CD8-positive, alpha-beta T cell (primary cell): ENCODE measurements at regions of chr7 and their contacts with region 1.

Region 1: DNA sequence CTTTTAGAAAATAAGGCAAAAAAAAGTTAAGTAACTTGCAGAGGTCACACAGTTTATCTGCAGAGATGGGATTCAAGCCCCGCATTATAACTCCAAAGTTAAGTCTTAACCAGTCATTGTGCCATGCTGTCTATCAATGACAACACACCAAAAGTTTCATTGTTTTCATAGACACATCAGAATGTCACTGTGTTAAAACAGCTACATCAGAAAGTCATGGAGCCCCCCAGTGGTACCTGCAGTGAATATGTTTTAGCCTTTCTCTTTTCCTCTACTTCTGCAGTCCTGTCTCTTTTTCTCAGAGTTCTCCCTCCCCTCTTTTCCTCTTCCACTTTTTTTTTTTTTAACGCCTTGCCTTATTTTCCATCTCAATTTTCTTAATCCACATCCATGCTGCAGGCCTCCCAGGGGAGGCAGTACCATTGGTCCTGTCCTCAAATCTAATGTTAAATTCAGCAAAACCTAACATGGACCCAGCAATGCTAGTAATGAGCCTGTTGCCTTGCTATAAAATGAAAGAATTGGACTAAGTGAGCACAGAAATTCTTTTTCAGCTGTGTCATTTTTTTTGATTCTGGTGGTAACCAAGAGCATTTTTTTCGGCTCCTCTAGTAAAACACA is 3.8 kb upstream of the NRCAM start:
- DNase-seq: peak in 4 of 9 experiments; percentile 17 to 60 (median 30)
- ATAC-seq: peak; percentile 23
- H3K4me3 ChIP-seq: no peak overlapping the region
- H3K4me3 Mint-ChIP-seq: no peak overlapping the region
- H3K27ac ChIP-seq: no peak overlapping the region
- H3K27ac Mint-ChIP-seq: peak overlapping the region; percentile 41
- H3K4me1 ChIP-seq: peaks cover 49% of the 10 kb centered on the region
- H3K4me1 Mint-ChIP-seq: peaks cover 62% of the 10 kb centered on the region
- H3K27me3 ChIP-seq: peaks cover 0 to 4% of the 10 kb centered on the region in 2 experiments
- H3K27me3 Mint-ChIP-seq: peaks cover 19% of the 10 kb centered on the region
- CTCF ChIP-seq: peak; percentile 56

Region 2: GRCh38 chr7:108049962-108050361 is 410.1 kb before region 1 on chr7:
- CTCF ChIA-PET with region 1: no interaction called
- POLR2A ChIA-PET with region 1: no interaction called
- intact Hi-C with region 1: no loop called
- DNase-seq: peak in 2 of 9 experiments; percentile 3 to 18
- ATAC-seq: no peak
- H3K4me3 ChIP-seq: no peak overlapping the region
- H3K4me3 Mint-ChIP-seq: no peak overlapping the region
- H3K27ac ChIP-seq: no peak overlapping the region
- H3K27ac Mint-ChIP-seq: no peak overlapping the region
- H3K4me1 ChIP-seq: peaks cover 4% of the 10 kb centered on the region
- H3K4me1 Mint-ChIP-seq: peaks cover 12% of the 10 kb centered on the region
- H3K27me3 ChIP-seq: no peaks in the 10 kb centered on the region
- H3K27me3 Mint-ChIP-seq: peaks cover 3% of the 10 kb centered on the region
- CTCF ChIP-seq: no peak

Region 3: DNA sequence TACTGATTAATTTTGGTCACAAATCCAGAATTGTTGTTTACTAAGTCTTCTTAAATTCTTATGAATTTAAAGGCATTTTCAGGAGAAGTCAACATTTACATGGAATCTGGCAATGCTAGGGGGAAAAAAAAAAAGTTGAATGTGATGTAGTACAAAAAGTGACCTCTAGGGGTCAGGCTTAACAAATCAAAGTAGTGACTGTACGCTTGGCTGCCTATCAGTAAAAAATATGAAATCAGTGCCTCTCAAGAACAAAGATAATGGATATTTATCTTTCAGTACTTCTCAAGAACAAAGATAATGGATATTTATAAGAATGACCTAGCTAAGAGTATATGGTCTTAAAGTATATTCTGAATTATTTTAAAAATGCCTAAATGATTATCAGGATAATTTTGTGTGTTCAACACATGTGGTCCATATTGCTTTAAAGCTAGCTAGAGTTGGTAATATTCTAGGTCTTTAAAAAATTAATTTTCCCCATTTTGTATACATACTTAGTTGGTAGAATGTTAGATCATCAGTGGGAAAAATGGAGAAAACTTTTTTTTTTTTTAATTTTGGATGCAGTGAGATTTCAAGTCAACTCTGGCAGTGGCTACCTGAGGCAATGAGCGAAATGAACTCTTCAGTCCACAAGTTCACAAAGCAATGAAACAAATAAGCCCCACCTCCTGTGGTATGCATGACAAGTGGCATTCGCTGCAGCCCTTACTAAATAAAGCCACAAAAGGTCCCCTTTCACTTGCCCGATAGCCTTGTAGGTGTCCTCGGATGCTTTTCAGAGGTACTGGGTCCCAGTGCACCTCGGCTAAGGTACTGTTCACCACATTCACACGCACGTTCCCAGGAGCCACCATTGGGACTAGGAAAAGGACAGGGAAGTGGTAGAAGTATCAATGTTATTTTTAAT is 278.7 kb before region 1 on chr7:
- CTCF ChIA-PET with region 1: interaction called, 3 read pairs
- POLR2A ChIA-PET with region 1: no interaction called
- intact Hi-C with region 1: loop called (anchors 2 kb)
- DNase-seq: peak in 2 of 9 experiments; percentile 51 to 66
- ATAC-seq: peak; percentile 59
- H3K4me3 ChIP-seq: no peak overlapping the region
- H3K4me3 Mint-ChIP-seq: no peak overlapping the region
- H3K27ac ChIP-seq: no peak overlapping the region
- H3K27ac Mint-ChIP-seq: no peak overlapping the region
- H3K4me1 ChIP-seq: no peaks in the 10 kb centered on the region
- H3K4me1 Mint-ChIP-seq: no peaks in the 10 kb centered on the region
- H3K27me3 ChIP-seq: no peaks in the 10 kb centered on the region
- H3K27me3 Mint-ChIP-seq: no peaks in the 10 kb centered on the region
- CTCF ChIP-seq: peak; percentile 94

Region 4: DNA sequence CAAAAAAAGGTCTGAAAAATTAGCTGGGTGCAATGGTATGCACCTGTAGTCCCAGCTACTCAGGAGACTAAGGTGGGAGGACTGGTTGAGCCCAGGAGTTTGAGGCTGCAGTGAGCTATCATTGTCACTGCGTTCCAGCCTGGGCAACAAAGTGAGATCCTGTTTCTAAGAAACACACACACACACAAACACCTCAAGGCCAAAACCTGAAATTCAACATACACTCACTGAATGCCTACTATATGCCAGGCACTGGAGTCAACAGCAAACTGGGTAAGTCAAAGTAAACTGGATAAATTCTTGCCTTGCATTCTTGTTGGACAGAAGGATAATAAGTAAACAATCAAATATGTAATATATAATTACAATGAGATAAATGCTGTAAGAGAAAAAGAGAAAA is 17.7 kb after region 1 on chr7:
- CTCF ChIA-PET with region 1: interaction called, 6 read pairs
- POLR2A ChIA-PET with region 1: no interaction called
- intact Hi-C with region 1: loop called in 1 of 2 experiments (anchors 2 kb)
- DNase-seq: no peak
- ATAC-seq: no peak
- H3K4me3 ChIP-seq: no peak overlapping the region
- H3K4me3 Mint-ChIP-seq: no peak overlapping the region
- H3K27ac ChIP-seq: no peak overlapping the region
- H3K27ac Mint-ChIP-seq: no peak overlapping the region
- H3K4me1 ChIP-seq: no peaks in the 10 kb centered on the region
- H3K4me1 Mint-ChIP-seq: no peaks in the 10 kb centered on the region
- H3K27me3 ChIP-seq: no peaks in the 10 kb centered on the region
- H3K27me3 Mint-ChIP-seq: no peaks in the 10 kb centered on the region
- CTCF ChIP-seq: no peak

Region 5: DNA sequence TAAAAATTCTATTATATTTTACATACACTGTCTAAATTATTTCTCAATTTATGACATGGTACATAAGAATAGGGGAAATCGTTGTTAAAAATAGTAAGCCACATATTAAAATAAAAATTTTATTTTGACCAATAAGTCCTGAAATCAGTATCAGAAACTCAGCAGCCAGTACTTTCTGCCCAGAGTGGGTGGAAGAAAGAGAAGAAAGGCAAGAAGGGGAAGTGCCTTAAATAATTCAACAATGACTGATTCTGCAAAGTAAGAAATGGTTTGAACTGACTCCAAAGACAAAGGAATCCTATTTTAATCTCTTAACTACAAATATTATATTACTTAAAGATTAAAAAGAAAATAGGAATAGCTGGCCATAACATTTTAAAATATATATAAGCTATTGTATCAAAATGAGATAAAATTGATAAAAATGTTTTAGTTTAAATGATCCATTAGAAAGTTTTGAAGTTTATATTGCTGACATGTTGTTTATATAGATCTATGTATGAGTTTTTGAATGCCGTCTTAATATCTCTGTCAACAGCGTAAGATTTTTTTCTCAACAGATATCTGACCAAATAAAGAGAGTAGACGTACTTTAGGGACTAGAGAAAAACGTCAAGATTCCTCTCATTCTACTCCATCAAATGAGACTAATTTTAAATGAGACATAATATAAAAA is 26.4 kb after region 1 on chr7:
- CTCF ChIA-PET with region 1: interaction called, 10 read pairs
- POLR2A ChIA-PET with region 1: no interaction called
- intact Hi-C with region 1: no loop called
- DNase-seq: no peak
- ATAC-seq: no peak
- H3K4me3 ChIP-seq: no peak overlapping the region
- H3K4me3 Mint-ChIP-seq: no peak overlapping the region
- H3K27ac ChIP-seq: no peak overlapping the region
- H3K27ac Mint-ChIP-seq: no peak overlapping the region
- H3K4me1 ChIP-seq: no peaks in the 10 kb centered on the region
- H3K4me1 Mint-ChIP-seq: no peaks in the 10 kb centered on the region
- H3K27me3 ChIP-seq: no peaks in the 10 kb centered on the region
- H3K27me3 Mint-ChIP-seq: no peaks in the 10 kb centered on the region
- CTCF ChIP-seq: no peak

Region 6: GRCh38 chr7:108569381-108570145 is 109.5 kb after region 1 on chr7 and contains the starts of genes DNAJB9 and THAP5:
- CTCF ChIA-PET with region 1: interaction called, 3 read pairs
- POLR2A ChIA-PET with region 1: interaction called, 8 read pairs
- intact Hi-C with region 1: loop called (anchors 2 to 5 kb)
- DNase-seq: peak; percentile 98 to 100 (median 99)
- ATAC-seq: peak; percentile 84
- H3K4me3 ChIP-seq: peak within 1 kb of the TSS; percentile 90 to 96
- H3K4me3 Mint-ChIP-seq: peak within 1 kb of the TSS; percentile 90
- H3K27ac ChIP-seq: peak within 1 kb of the TSS; percentile 99 to 100
- H3K27ac Mint-ChIP-seq: peak within 1 kb of the TSS; percentile 98
- H3K4me1 ChIP-seq: peaks cover 45% of the 10 kb centered on the region
- H3K4me1 Mint-ChIP-seq: peaks cover 65% of the 10 kb centered on the region
- H3K27me3 ChIP-seq: no peaks in the 10 kb centered on the region
- H3K27me3 Mint-ChIP-seq: no peaks in the 10 kb centered on the region
- CTCF ChIP-seq: no peak
- total RNA-seq, gene DNAJB9: 66.7 to 67.7 TPM
- total RNA-seq, gene THAP5: 10.7 to 13.5 TPM